ENCODE measurements at regions of chr5 and their contacts with region 1.

Region 1: GRCh38 chr5:37034955-37035354 is 158.4 kb downstream of the NIPBL start:
- DNase-seq: no peak
- H3K4me3 ChIP-seq: no peak overlapping the region
- H3K27ac ChIP-seq: no peak overlapping the region
- H3K4me1 ChIP-seq: no peaks in the 10 kb centered on the region
- H3K27me3 ChIP-seq: no peaks in the 10 kb centered on the region
- CTCF ChIP-seq: no peak

Region 2: GRCh38 chr5:36790838-36791237 is 244.1 kb before region 1 on chr5:
- intact Hi-C with region 1: no loop called
- DNase-seq: no peak
- H3K4me3 ChIP-seq: no peak overlapping the region
- H3K27ac ChIP-seq: no peak overlapping the region
- H3K4me1 ChIP-seq: no peaks in the 10 kb centered on the region
- H3K27me3 ChIP-seq: no peaks in the 10 kb centered on the region
- CTCF ChIP-seq: no peak

Region 3: GRCh38 chr5:37310360-37310759 is 275.4 kb after region 1 on chr5:
- intact Hi-C with region 1: loop called (anchors 5 kb)
- DNase-seq: no peak
- H3K4me3 ChIP-seq: no peak overlapping the region
- H3K27ac ChIP-seq: no peak overlapping the region
- H3K4me1 ChIP-seq: no peaks in the 10 kb centered on the region
- H3K27me3 ChIP-seq: no peaks in the 10 kb centered on the region
- CTCF ChIP-seq: no peak

Measured in ascending aorta (tissue), 2 donors.